ENCODE measurements at regions of chr6 and their contacts with region 1.

Region 1: GRCh38 chr6:118709859-118710350 is 58.5 kb upstream of the CEP85L start:
- DNase-seq: peak; percentile 41
- H3K4me3 ChIP-seq: peak overlapping the region; percentile 63
- H3K27ac ChIP-seq: peak overlapping the region; percentile 92
- H3K27me3 ChIP-seq: no peaks in the 10 kb centered on the region
- CTCF ChIP-seq: no peak

Region 2: GRCh38 chr6:118668761-118669385 is 41.0 kb before region 1 on chr6:
- CTCF ChIA-PET with region 1: no interaction called
- POLR2A ChIA-PET with region 1: interaction called, 15 read pairs
- DNase-seq: peak; percentile 52
- H3K4me3 ChIP-seq: no peak overlapping the region
- H3K27ac ChIP-seq: no peak overlapping the region
- H3K27me3 ChIP-seq: no peaks in the 10 kb centered on the region
- CTCF ChIP-seq: no peak

Region 3: GRCh38 chr6:119259027-119259426 is 549.1 kb after region 1 on chr6:
- CTCF ChIA-PET with region 1: no interaction called
- POLR2A ChIA-PET with region 1: no interaction called
- DNase-seq: no peak
- H3K4me3 ChIP-seq: no peak overlapping the region
- H3K27ac ChIP-seq: no peak overlapping the region
- H3K27me3 ChIP-seq: no peaks in the 10 kb centered on the region
- CTCF ChIP-seq: no peak

Measured in AG04450 (cell line).